Activated CD4-positive, alpha-beta memory T cell treated with anti-CD3 and anti-CD28 coated beads, Interleukin-2, amount 10 ng/mL, durations not matched to agents 7 days and 5 days (primary cell): ENCODE measurements at regions of chr13 and their contacts with region 1.

Region 1: GRCh38 chr13:73754727-73755292 is 379.4 kb downstream of the KLF12 start:
- DNase-seq: no peak
- H3K4me3 Mint-ChIP-seq: no peak overlapping the region
- H3K27ac Mint-ChIP-seq: no peak overlapping the region
- H3K4me1 Mint-ChIP-seq: peaks cover 4% of the 10 kb centered on the region
- H3K27me3 Mint-ChIP-seq: no peaks in the 10 kb centered on the region

Region 2: DNA sequence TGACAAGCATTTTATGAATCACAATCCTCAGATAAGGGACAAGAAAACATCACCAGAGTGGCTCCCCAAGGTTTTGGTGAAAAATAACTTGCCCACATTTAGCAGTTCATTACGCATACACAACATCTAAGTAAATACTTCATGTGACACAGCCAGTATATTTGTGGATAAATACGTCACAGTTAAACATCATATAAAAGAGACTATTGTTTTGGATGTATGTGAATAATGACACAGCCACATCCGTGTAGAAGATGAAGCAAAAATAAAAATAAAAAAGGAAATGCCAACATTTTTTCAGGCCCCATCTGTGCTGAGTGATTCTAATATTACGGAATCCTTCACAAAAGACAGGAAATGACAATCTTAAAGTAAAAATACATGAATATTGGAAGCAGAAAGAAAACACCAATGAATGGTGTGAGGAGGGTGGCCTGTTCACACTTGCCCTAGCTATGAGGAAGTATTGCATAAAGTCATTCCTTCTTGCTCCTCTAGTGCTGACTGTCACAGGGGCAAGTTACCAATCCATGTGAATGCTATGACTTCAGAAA is 77.7 kb before region 1 on chr13:
- CTCF ChIA-PET with region 1: no interaction called
- POLR2A ChIA-PET with region 1: no interaction called
- DNase-seq: no peak
- H3K4me3 Mint-ChIP-seq: no peak overlapping the region
- H3K27ac Mint-ChIP-seq: no peak overlapping the region
- H3K4me1 Mint-ChIP-seq: no peaks in the 10 kb centered on the region
- H3K27me3 Mint-ChIP-seq: no peaks in the 10 kb centered on the region

Region 3: DNA sequence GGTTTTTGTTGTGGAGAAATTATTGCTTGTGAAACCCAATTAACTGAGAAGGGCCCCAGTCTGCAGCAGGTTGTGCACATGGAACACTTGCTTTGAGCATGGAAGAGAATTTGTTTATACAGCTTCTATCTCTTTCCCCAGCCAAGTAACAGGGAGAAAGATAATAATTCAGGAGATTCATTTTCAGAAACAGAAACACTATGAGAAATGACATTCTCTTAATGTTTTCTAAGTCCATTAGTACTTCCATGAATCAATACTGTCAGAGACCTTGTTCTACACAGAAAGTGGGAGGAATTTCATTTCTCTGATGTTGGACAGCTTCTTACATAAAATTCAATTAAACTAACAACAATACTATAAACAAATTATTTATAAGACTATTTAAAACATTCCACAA is 66.9 kb before region 1 on chr13:
- CTCF ChIA-PET with region 1: no interaction called
- POLR2A ChIA-PET with region 1: no interaction called
- DNase-seq: no peak
- H3K4me3 Mint-ChIP-seq: no peak overlapping the region
- H3K27ac Mint-ChIP-seq: no peak overlapping the region
- H3K4me1 Mint-ChIP-seq: no peaks in the 10 kb centered on the region
- H3K27me3 Mint-ChIP-seq: no peaks in the 10 kb centered on the region

Region 4: GRCh38 chr13:73742982-73743381 is 11.8 kb before region 1 on chr13:
- CTCF ChIA-PET with region 1: no interaction called
- POLR2A ChIA-PET with region 1: no interaction called
- DNase-seq: no peak
- H3K4me3 Mint-ChIP-seq: no peak overlapping the region
- H3K27ac Mint-ChIP-seq: no peak overlapping the region
- H3K4me1 Mint-ChIP-seq: peaks cover 16% of the 10 kb centered on the region
- H3K27me3 Mint-ChIP-seq: no peaks in the 10 kb centered on the region

Region 5: DNA sequence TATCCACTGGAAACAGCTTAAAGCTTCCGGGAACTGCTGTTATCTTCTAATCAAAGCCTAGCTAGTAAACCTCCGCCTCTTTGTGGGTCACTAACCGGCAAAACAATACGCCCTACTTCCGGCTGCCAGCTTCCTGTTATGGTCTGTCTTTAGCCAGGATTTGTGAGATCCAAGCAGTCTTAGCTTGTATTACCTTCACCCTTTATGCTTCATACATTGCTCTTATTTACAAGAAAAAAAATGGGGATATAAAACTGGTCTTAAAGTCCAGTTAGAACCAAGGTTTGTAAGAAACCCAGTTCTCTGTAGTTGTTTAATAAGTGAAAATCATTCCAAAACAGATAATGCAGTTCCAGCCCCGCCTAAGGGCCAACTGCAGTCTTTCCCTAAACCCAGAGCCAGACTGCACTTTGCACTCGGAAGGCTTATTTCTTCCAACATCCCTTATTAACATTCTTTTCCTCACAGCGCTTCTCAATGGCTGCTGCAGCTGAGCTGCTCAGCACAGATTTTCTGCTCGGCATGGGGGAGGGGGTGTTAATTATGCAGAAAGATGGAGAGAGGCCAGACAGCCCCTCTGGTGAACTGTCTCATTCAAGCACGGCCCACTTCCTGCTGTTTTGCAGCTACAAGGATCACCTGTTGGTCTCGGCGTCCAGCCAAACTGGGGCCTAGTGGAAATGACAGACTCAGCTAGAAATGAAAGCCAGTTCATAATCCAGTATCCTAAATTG is 11.0 kb after region 1 on chr13:
- CTCF ChIA-PET with region 1: interaction called, 10 read pairs
- POLR2A ChIA-PET with region 1: interaction called, 3 read pairs
- DNase-seq: peak; percentile 77
- H3K4me3 Mint-ChIP-seq: peak overlapping the region; percentile 59
- H3K27ac Mint-ChIP-seq: peak overlapping the region; percentile 90
- H3K4me1 Mint-ChIP-seq: peaks cover 42% of the 10 kb centered on the region
- H3K27me3 Mint-ChIP-seq: no peaks in the 10 kb centered on the region

Region 6: GRCh38 chr13:73870970-73871935 is 116.4 kb after region 1 on chr13:
- CTCF ChIA-PET with region 1: no interaction called
- POLR2A ChIA-PET with region 1: no interaction called
- DNase-seq: no peak
- H3K4me3 Mint-ChIP-seq: no peak overlapping the region
- H3K27ac Mint-ChIP-seq: no peak overlapping the region
- H3K4me1 Mint-ChIP-seq: peaks cover 11% of the 10 kb centered on the region
- H3K27me3 Mint-ChIP-seq: no peaks in the 10 kb centered on the region